Adrenal gland (tissue), 19 donors: ENCODE measurements at regions of chr19 and their contacts with region 1.

Region 1: DNA sequence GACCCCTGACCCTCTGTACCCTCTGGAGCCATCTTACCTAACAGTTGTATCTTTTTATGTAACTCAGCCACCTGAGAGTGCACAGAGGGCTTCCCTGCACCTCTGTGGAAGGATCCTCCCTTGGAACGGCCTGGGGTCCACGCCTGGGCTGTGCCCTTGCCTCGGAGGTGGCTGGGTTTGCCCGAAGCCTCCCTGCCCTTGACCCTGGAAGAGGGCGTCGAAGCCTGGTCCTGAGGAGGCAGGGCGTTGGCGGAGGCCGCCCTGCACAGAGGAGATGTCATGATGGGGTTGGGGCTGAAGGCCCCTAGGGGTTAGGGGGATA is 224 bp downstream of the ODAD3 start:
- DNase-seq: no peak
- H3K4me3 ChIP-seq: peak overlapping the region in 1 of 4 donors; percentile 81
- H3K27ac ChIP-seq: peak overlapping the region in 4 of 5 donors; percentile 51 to 87 (median 72)
- H3K4me1 ChIP-seq: peaks cover 12 to 17% of the 10 kb centered on the region in 2 donors
- H3K27me3 ChIP-seq: no peaks in the 10 kb centered on the region
- CTCF ChIP-seq: no peak
- POLR2A ChIP-seq: no peak

Region 2: DNA sequence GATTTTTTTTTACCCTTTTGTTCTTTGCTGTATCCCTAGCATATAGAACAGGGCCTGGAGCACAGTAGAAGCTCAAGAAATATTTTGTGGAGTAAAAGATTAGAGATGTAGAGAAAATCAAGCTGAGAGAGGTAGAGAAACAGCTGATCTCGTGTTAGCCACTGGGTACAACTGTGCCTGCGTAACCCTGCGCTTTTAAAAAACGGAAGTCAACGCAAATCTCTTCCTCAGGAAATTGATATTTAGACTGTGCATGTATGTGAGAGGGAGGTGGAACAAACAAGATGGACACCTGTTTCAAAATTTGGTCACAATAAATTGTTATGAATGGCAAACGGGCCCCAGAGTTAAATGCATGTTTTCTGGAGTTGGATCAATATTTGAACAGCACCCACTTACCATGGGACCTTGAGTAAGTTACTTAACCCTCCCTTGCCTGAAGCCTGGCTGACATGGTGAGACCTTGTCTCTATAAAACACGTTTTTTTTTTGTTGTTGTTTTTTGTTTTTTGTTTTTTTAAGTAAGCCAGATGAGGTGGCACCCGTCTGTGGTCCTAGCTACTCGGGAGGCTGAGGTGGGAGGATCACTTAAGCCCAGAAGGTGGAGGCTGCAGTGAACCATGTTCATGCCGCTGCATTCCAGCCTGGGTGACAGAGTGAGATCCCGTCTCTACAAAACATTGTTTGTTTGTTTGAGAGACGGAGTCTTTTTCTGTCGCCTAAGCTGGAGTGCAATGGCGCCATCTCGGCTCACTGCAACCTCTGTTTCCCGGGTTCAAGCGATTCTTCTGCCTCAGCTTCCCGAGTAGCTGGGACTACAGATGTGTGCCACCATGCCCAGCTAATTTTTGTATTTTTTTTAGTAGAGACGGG is 47.3 kb before region 1 on chr19:
- intact Hi-C with region 1: loop called (anchors 5 kb)
- DNase-seq: no peak
- H3K4me3 ChIP-seq: no peak overlapping the region
- H3K27ac ChIP-seq: peak overlapping the region in 1 of 5 donors; percentile 3
- H3K4me1 ChIP-seq: peaks cover 3 to 14% of the 10 kb centered on the region in 2 donors
- H3K27me3 ChIP-seq: no peaks in the 10 kb centered on the region
- CTCF ChIP-seq: no peak
- POLR2A ChIP-seq: no peak

Region 3: DNA sequence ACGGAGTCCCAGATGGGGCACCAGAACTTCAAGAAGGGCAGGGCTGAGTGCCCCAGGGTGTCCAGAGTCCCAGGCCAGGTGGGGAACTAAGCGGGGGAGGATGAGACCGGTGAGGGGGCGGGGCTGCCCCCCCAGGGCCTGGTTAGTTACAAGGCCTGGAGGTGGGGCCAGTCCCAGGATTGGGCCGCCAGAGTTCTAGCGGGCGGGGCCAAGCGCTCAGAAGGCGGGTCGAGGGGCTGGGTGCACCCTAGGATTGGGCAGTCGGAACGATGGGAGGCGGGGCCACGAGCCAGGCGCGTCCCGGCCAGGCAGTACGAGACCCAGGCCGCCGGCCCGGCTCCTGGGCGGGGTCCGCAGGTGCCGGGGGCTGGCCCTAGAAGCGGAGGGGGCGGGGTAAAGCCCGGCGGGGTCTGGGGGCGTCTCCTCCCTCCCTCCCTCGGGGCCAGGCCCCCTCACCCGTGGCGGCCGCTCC is 70.4 kb after region 1 on chr19:
- intact Hi-C with region 1: no loop called
- DNase-seq: peak; percentile 97 to 98 (median 97)
- H3K4me3 ChIP-seq: peak overlapping the region; percentile 28 to 87 (median 72)
- H3K27ac ChIP-seq: peak overlapping the region; percentile 67 to 94 (median 90)
- H3K4me1 ChIP-seq: peaks cover 5 to 12% of the 10 kb centered on the region in 2 donors
- H3K27me3 ChIP-seq: no peaks in the 10 kb centered on the region
- CTCF ChIP-seq: no peak
- POLR2A ChIP-seq: no peak

Region 4: GRCh38 chr19:11587302-11587974 is 152.7 kb after region 1 on chr19:
- intact Hi-C with region 1: no loop called
- DNase-seq: peak; percentile 70 to 92 (median 78)
- H3K4me3 ChIP-seq: no peak overlapping the region
- H3K27ac ChIP-seq: no peak overlapping the region
- H3K4me1 ChIP-seq: no peaks in the 10 kb centered on the region
- H3K27me3 ChIP-seq: no peaks in the 10 kb centered on the region
- CTCF ChIP-seq: peak; percentile 74 to 93 (median 85)
- POLR2A ChIP-seq: no peak

Region 5: DNA sequence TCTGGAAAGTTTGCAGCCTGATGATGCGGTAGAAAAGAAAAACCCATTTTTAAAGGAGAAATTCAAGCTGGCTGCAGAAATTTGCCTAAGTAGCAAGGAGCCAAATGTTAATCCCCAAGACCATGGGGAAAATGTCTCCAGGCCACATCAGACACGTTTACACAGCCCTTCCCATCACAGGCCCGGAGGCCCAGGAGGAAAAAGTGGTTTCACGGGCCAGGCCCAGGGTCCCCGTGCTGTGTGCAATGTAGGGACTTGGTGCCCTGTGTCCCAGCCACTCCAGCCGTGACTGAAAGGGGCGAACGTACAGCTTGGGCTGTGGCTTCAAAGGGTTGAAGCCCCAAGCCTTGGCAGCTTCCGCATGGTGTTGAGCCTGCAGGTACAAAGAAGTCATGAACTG is 198.5 kb after region 1 on chr19:
- intact Hi-C with region 1: no loop called
- DNase-seq: no peak
- H3K4me3 ChIP-seq: no peak overlapping the region
- H3K27ac ChIP-seq: no peak overlapping the region
- H3K4me1 ChIP-seq: no peaks in the 10 kb centered on the region
- H3K27me3 ChIP-seq: no peaks in the 10 kb centered on the region
- CTCF ChIP-seq: no peak
- POLR2A ChIP-seq: no peak